ENCODE measurements at regions of chr3 and their contacts with region 1.

Region 1: DNA sequence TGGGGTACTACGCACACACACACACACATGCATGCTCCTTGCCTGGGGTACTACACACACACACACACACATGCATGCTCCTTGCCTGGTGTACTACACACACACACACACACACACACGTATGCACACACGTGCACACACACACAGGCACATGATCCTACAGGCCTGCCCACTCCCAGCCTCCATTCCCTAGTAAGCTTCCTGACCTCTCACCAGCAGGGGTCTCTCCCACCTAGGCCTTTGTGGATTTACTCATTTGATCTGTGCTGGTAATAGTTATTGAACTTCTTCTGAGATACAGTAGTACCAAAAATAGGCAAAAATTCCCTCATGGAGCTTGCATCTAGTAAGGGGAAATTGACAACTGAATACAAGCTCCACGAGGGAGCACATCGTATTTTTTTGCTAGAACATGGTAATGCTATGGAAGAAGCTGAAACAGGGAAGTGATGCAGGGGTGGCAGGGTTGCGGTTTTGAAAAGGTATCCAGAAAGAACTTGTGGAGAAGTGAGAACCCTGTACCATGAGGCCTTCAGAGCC is 19.1 kb downstream of the TTC21A start:
- DNase-seq: peak; percentile 5 to 61
- H3K4me3 ChIP-seq: no peak overlapping the region
- H3K4me3 Mint-ChIP-seq: peak overlapping the region; percentile 8
- H3K27ac Mint-ChIP-seq: peak overlapping the region; percentile 29
- H3K4me1 ChIP-seq: peaks cover 23% of the 10 kb centered on the region
- H3K4me1 Mint-ChIP-seq: peaks cover 27% of the 10 kb centered on the region
- H3K27me3 ChIP-seq: no peaks in the 10 kb centered on the region
- H3K27me3 Mint-ChIP-seq: no peaks in the 10 kb centered on the region
- CTCF ChIP-seq: peak; percentile 29 to 73

Region 2: GRCh38 chr3:39166134-39166731 is 39.6 kb after region 1 on chr3:
- CTCF ChIA-PET with region 1: interaction called, 8 read pairs
- POLR2A ChIA-PET with region 1: no interaction called
- intact Hi-C with region 1: loop called (anchors 1 kb)
- DNase-seq: no peak
- H3K4me3 ChIP-seq: no peak overlapping the region
- H3K4me3 Mint-ChIP-seq: no peak overlapping the region
- H3K27ac Mint-ChIP-seq: no peak overlapping the region
- H3K4me1 ChIP-seq: peaks cover 5% of the 10 kb centered on the region; the same call in 1 of the 2 replicates
- H3K4me1 Mint-ChIP-seq: no peaks in the 10 kb centered on the region
- H3K27me3 ChIP-seq: no peaks in the 10 kb centered on the region
- H3K27me3 Mint-ChIP-seq: no peaks in the 10 kb centered on the region
- CTCF ChIP-seq: no peak

Region 3: DNA sequence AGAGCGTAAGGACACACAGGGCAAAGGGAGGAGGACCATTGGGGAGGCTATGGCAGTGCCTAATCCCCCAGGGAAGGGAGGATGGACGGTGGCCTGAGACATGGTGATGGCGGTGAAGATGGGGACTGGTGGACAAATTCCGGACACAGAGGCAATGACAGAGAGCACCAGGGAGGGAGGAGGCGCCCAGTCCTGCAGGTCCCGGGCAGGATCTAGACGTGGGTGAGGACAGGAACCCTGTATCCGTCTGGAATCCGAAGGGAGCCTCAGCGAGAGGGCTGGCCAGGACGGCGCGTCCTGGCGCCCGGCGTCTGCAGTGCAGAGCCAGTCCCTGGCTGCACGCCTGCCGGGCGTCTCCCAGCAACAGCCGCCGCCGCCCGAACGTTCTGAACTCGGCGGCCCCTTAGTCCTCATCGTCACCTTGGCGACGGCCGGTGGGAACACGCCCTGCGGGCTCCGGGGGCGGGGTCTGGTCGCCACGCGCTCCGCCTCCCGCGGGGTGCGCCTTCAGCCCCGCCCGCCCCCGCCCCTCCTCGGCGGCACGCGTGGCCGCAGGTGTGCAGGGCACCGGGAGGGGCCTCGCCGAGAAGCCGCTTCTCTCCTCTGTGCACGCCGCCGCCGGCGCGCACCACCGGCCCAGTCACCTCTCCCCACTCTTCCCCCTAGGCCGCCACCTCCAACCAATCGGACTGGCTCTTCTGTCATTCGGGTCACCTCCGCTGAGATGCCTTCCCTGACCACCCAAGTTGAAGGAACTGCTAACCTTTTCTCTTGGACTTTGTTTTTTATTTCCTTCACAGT is 54.1 kb after region 1 on chr3:
- CTCF ChIA-PET with region 1: interaction called, 11 read pairs
- POLR2A ChIA-PET with region 1: no interaction called
- intact Hi-C with region 1: loop called (anchors 2 kb)
- DNase-seq: peak; percentile 89 to 94
- H3K4me3 ChIP-seq: peak overlapping the region; percentile 37
- H3K4me3 Mint-ChIP-seq: peak overlapping the region; percentile 88
- H3K27ac Mint-ChIP-seq: peak overlapping the region; percentile 97
- H3K4me1 ChIP-seq: peaks cover 24% of the 10 kb centered on the region
- H3K4me1 Mint-ChIP-seq: peaks cover 33% of the 10 kb centered on the region
- H3K27me3 ChIP-seq: no peaks in the 10 kb centered on the region
- H3K27me3 Mint-ChIP-seq: no peaks in the 10 kb centered on the region
- CTCF ChIP-seq: no peak

Region 4: GRCh38 chr3:39189959-39190269 is 63.3 kb after region 1 on chr3:
- CTCF ChIA-PET with region 1: interaction called, 9 read pairs
- POLR2A ChIA-PET with region 1: no interaction called
- intact Hi-C with region 1: loop called (anchors 1 kb)
- DNase-seq: peak; percentile 70 to 75
- H3K4me3 ChIP-seq: no peak overlapping the region
- H3K4me3 Mint-ChIP-seq: no peak overlapping the region
- H3K27ac Mint-ChIP-seq: peak overlapping the region; percentile 22
- H3K4me1 ChIP-seq: peaks cover 26% of the 10 kb centered on the region
- H3K4me1 Mint-ChIP-seq: peaks cover 13% of the 10 kb centered on the region
- H3K27me3 ChIP-seq: no peaks in the 10 kb centered on the region
- H3K27me3 Mint-ChIP-seq: no peaks in the 10 kb centered on the region
- CTCF ChIP-seq: peak; percentile 79 to 85

Region 5: DNA sequence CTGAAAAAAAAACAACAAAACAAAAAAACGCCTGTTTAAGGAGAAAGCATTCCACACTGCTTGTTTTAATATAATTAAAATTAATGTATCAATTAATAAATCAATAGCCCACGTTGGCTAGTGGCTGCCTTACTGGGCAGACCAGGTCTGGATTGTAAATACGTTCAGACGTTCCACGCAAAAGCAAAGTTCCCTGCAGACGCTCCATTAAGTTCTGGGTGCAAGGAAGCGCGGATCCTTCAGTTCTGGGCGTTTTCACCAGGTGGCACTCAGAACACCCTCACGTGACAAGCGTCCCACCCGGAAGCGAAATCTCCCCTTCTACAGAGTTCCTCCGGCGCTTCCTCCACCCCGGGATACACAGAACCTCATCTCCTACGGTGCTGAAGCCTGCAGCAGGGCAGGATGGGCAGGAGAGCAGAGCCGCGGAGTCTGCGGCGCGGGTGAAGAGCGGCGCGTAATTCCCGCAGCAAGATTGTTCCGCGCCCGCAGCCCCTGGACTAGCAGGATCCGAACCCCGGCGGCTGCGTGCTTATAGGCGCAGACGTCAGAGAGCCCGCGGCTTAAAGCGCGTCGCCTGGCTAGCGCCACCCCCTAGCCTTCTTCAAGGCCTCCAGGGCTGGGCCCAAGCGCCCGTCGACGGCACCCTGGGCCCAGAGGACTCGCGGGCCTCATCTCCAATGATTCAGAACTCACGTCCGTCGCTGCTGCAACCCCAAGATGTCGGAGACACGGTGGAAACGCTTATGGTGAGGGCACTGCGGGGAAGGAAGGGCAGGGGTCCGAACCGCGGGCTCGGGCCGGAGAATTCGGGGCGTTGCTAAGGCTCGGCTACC is 256.7 kb after region 1 on chr3 and contains the start of gene SLC25A38:
- CTCF ChIA-PET with region 1: interaction called, 4 read pairs
- POLR2A ChIA-PET with region 1: interaction called, 3 read pairs
- intact Hi-C with region 1: loop called (anchors 10 kb)
- DNase-seq: peak; percentile 82 to 87
- H3K4me3 ChIP-seq: peak within 1 kb of the TSS; percentile 75
- H3K4me3 Mint-ChIP-seq: peak within 1 kb of the TSS; percentile 96
- H3K27ac Mint-ChIP-seq: peak within 1 kb of the TSS; percentile 99
- H3K4me1 ChIP-seq: peaks cover 38% of the 10 kb centered on the region
- H3K4me1 Mint-ChIP-seq: peaks cover 27% of the 10 kb centered on the region
- H3K27me3 ChIP-seq: no peaks in the 10 kb centered on the region
- H3K27me3 Mint-ChIP-seq: no peaks in the 10 kb centered on the region
- CTCF ChIP-seq: peak in 1 of 2 experiments; percentile 49
- total RNA-seq, gene SLC25A38: 33.1 and 37.7 TPM in 2 replicates